Left lung (tissue), 14 donors: ENCODE measurements at regions of chr18 and their contacts with region 1.

Region 1: GRCh38 chr18:11733031-11733430 is 44.0 kb downstream of the GNAL start:
- DNase-seq: peak; percentile 58 to 96 (median 76)
- ATAC-seq: peak; percentile 99
- H3K4me3 ChIP-seq: no peak overlapping the region
- H3K27ac ChIP-seq: no peak overlapping the region
- H3K4me1 ChIP-seq: peaks cover 0 to 6% of the 10 kb centered on the region in 2 donors
- H3K27me3 ChIP-seq: peaks cover 0 to 36% of the 10 kb centered on the region in 2 donors
- CTCF ChIP-seq: peak; percentile 86 to 87

Region 2: GRCh38 chr18:11859903-11860407 is 126.9 kb after region 1 on chr18:
- intact Hi-C with region 1: loop called in 1 of 2 experiments (anchors 10 kb)
- DNase-seq: no peak
- ATAC-seq: peak; percentile 13
- H3K4me3 ChIP-seq: no peak overlapping the region
- H3K27ac ChIP-seq: no peak overlapping the region
- H3K4me1 ChIP-seq: peaks cover 0 to 18% of the 10 kb centered on the region in 2 donors
- H3K27me3 ChIP-seq: no peaks in the 10 kb centered on the region
- CTCF ChIP-seq: no peak

Region 3: DNA sequence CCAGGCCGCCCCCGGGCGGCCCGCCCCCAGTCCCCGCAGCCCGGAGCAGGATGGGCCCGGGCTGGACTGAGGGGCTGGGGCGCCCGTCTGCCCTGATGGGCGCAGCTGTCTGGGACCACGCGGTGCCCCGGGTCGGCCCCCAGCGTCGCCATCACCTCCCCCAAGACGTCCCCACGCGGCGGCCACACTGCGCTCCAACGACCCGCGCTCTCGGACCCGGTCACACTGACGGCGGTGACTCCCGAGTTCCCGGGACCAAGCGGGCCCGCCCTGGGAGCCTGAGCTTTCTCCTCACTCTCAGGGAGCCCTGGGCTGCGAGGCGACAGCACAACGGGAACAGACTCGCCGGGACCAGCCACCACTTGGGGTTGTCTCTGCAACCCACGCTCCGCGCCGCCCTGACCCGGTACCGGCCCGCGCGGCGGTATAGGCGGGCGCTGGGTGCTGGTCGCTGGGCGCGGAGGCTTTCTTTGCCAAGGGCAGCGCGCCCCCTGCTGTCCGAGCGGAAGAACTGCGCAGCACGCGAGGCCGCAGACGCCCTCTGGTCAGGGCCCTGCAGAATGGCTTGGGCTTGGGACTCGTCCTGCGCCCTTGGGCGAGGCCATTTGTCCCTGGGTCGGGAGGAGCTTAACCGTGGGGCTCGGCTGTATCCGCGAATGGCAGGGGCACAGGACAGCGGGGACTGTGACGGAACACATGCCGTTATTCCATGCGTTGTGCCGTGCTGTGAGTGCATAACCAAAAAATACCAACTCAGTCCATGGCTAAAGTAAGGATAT is 305.8 kb after region 1 on chr18:
- intact Hi-C with region 1: loop called in 1 of 2 experiments (anchors 10 kb)
- DNase-seq: peak; percentile 82 to 96 (median 84)
- ATAC-seq: peak; percentile 99
- H3K4me3 ChIP-seq: peak overlapping the region; percentile 35 to 45
- H3K27ac ChIP-seq: no peak overlapping the region
- H3K4me1 ChIP-seq: peaks cover 3 to 13% of the 10 kb centered on the region in 2 donors
- H3K27me3 ChIP-seq: peaks cover 0 to 14% of the 10 kb centered on the region in 2 donors
- CTCF ChIP-seq: peak; percentile 98 to 100